ENCODE measurements at regions of chr6 and their contacts with region 1.

Region 1: GRCh38 chr6:52650941-52651340 is 20.0 kb upstream of the TMEM14A start:
- DNase-seq: no peak
- H3K4me3 ChIP-seq: no peak overlapping the region
- H3K27ac ChIP-seq: no peak overlapping the region
- H3K4me1 ChIP-seq: no peaks in the 10 kb centered on the region
- H3K27me3 ChIP-seq: no peaks in the 10 kb centered on the region
- CTCF ChIP-seq: no peak

Region 2: GRCh38 chr6:52595000-52595795 is 55.7 kb before region 1 on chr6:
- CTCF ChIA-PET with region 1: interaction called, 16 read pairs
- POLR2A ChIA-PET with region 1: no interaction called
- intact Hi-C with region 1: no loop called
- DNase-seq: no peak
- H3K4me3 ChIP-seq: no peak overlapping the region
- H3K27ac ChIP-seq: no peak overlapping the region
- H3K4me1 ChIP-seq: peaks cover 11% of the 10 kb centered on the region
- H3K27me3 ChIP-seq: no peaks in the 10 kb centered on the region
- CTCF ChIP-seq: no peak